Caco-2 (cell line): ENCODE measurements at regions of chr6 and their contacts with region 1.

Region 1: GRCh38 chr6:168746013-168746412 is 305.0 kb downstream of the SMOC2 start:
- DNase-seq: peak; percentile 59 to 67
- H3K4me3 ChIP-seq: no peak overlapping the region
- H3K4me3 Mint-ChIP-seq: no peak overlapping the region
- H3K27ac Mint-ChIP-seq: no peak overlapping the region
- H3K4me1 ChIP-seq: peaks cover 16% of the 10 kb centered on the region
- H3K4me1 Mint-ChIP-seq: no peaks in the 10 kb centered on the region
- H3K27me3 ChIP-seq: no peaks in the 10 kb centered on the region
- H3K27me3 Mint-ChIP-seq: no peaks in the 10 kb centered on the region
- CTCF ChIP-seq: no peak

Region 2: DNA sequence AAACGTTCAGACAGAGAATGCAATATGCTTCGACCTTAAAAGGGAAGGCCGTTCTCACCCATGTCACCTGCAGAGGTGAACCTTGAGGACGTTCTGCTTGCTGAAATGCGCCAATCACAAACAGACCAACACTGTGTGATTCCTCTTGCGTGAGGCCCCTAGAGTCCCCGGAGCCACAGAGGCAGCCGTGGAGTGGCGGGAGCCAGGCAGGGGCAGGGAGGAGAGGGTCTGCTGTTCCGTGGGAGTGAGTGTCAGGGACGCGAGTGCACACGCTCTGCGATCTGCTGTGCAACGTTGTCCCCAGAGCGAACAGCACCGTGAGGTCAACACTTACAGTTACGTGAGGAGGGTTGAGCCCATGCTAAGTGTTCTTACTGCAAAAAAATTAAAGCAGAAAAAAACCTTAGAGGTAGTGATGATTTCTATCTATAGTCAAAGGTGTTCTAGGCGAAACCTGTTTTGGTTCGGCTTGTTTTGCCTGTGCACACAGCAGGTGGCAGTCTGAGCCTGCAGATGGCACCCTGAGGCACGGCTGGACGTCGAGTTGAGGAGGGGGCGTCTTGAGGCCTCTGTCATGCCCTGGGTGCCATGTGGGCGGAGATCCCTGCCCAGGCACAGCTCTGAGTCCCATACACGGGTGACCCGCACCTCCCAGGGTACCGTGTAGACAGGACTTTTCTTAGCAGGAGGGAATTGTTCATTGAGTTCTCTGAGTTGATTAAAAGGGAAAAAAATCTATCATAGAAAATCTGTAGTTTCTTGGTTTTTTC is 595.3 kb before region 1 on chr6:
- CTCF ChIA-PET with region 1: no interaction called
- POLR2A ChIA-PET with region 1: no interaction called
- intact Hi-C with region 1: no loop called
- DNase-seq: peak in 1 of 2 experiments; percentile 65
- H3K4me3 ChIP-seq: no peak overlapping the region
- H3K4me3 Mint-ChIP-seq: peak overlapping the region; percentile 42
- H3K27ac Mint-ChIP-seq: no peak overlapping the region
- H3K4me1 ChIP-seq: 0 out of 2 replicates have a peak, but pooled peaks cover 4% of the 10 kb centered on the region
- H3K4me1 Mint-ChIP-seq: peaks cover 9% of the 10 kb centered on the region
- H3K27me3 ChIP-seq: no peaks in the 10 kb centered on the region
- H3K27me3 Mint-ChIP-seq: no peaks in the 10 kb centered on the region
- CTCF ChIP-seq: peak; percentile 62 to 75

Region 3: DNA sequence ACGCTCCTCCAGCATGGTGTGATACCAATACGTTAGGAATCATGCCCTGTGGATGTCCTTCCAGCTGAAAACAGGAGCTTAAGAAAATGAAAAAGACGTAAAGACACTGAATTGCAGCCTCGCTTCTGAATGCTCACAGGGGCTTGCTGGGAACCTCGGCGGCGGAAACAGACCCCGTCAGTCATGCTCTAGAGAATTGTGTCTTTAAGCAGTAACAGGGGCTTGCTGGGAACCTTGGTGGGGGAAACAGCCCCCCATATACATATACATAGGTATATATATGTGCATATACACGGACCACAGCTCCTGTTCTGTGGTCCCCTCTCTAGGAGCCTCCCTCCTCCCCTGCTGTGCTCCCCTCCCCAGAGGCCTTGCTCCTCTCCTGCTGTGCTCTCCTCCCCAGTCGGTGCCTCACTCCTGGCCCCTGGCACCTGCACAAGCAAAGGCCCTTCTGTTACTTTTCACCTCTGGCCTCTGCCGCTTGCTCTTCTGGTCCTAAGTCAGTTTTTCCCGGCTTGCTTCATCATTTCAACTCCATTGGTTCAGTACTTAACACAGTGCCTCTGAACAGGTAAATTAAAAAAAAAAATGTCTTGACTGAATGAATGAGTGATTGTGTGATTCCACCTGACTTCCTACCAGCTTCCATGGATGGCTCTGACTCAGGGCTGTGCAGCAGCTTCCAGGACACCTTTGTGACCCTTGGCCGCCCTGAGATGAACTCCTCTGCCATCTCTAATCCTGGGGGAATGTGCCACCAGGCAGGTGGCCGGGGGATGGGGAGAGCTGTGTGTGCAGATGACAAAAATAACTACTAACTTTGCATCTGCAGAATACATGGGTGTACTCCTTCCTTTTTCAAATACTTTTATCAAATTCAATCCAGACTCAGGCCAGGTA is 58.9 kb before region 1 on chr6:
- CTCF ChIA-PET with region 1: no interaction called
- POLR2A ChIA-PET with region 1: no interaction called
- intact Hi-C with region 1: no loop called
- DNase-seq: peak; percentile 63 to 76
- H3K4me3 ChIP-seq: no peak overlapping the region
- H3K4me3 Mint-ChIP-seq: peak overlapping the region; percentile 49
- H3K27ac Mint-ChIP-seq: peak overlapping the region; percentile 86
- H3K4me1 ChIP-seq: peaks cover 37% of the 10 kb centered on the region
- H3K4me1 Mint-ChIP-seq: peaks cover 22% of the 10 kb centered on the region
- H3K27me3 ChIP-seq: no peaks in the 10 kb centered on the region
- H3K27me3 Mint-ChIP-seq: no peaks in the 10 kb centered on the region
- CTCF ChIP-seq: no peak

Region 4: GRCh38 chr6:168756009-168756634 is 10.1 kb after region 1 on chr6:
- CTCF ChIA-PET with region 1: no interaction called
- POLR2A ChIA-PET with region 1: no interaction called
- intact Hi-C with region 1: loop called (anchors 1 kb)
- DNase-seq: peak; percentile 32 to 46
- H3K4me3 ChIP-seq: no peak overlapping the region
- H3K4me3 Mint-ChIP-seq: peak overlapping the region; percentile 44
- H3K27ac Mint-ChIP-seq: peak overlapping the region; percentile 88
- H3K4me1 ChIP-seq: peaks cover 31% of the 10 kb centered on the region
- H3K4me1 Mint-ChIP-seq: peaks cover 29% of the 10 kb centered on the region
- H3K27me3 ChIP-seq: no peaks in the 10 kb centered on the region
- H3K27me3 Mint-ChIP-seq: no peaks in the 10 kb centered on the region
- CTCF ChIP-seq: no peak

Region 5: DNA sequence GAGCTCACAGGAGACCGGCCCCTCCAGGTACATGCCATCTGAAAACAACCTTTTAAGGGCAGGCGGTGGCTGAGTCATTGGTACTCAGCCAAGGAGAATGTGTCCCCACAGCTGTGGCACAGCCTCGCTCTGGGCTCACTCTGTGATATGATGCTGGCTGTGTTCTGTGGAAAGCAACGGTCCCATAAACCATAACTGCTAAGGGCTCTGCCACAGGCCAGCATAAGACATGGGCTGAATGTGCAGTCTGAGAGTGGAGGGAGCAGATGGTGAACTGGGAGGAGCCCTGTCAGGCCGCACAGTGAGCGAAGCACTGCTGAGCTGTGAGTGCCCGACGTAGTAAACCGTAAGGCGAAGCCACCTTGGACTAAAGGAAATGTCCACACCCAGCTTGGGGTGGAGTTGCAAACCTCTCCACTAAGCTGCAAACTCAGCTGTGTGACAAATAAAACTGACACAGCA is 131.8 kb after region 1 on chr6:
- CTCF ChIA-PET with region 1: no interaction called
- POLR2A ChIA-PET with region 1: no interaction called
- intact Hi-C with region 1: no loop called
- DNase-seq: no peak
- H3K4me3 ChIP-seq: no peak overlapping the region
- H3K4me3 Mint-ChIP-seq: no peak overlapping the region
- H3K27ac Mint-ChIP-seq: no peak overlapping the region
- H3K4me1 ChIP-seq: no peaks in the 10 kb centered on the region
- H3K4me1 Mint-ChIP-seq: no peaks in the 10 kb centered on the region
- H3K27me3 ChIP-seq: no peaks in the 10 kb centered on the region
- H3K27me3 Mint-ChIP-seq: no peaks in the 10 kb centered on the region
- CTCF ChIP-seq: no peak